A673 (cell line): ENCODE measurements at regions of chr1 and their contacts with region 1.

Region 1: GRCh38 chr1:60228041-60228491 is 154.5 kb upstream of the C1orf87 start:
- DNase-seq: peak; percentile 47
- H3K4me3 ChIP-seq: no peak overlapping the region
- H3K27ac ChIP-seq: no peak overlapping the region
- H3K4me1 ChIP-seq: no peaks in the 10 kb centered on the region
- H3K27me3 ChIP-seq: peaks cover 66% of the 10 kb centered on the region
- CTCF ChIP-seq: no peak

Region 2: GRCh38 chr1:59971464-59971911 is 256.6 kb before region 1 on chr1:
- CTCF ChIA-PET with region 1: no interaction called
- POLR2A ChIA-PET with region 1: no interaction called
- intact Hi-C with region 1: loop called (anchors 10 kb)
- DNase-seq: peak; percentile 85
- H3K4me3 ChIP-seq: no peak overlapping the region
- H3K27ac ChIP-seq: no peak overlapping the region
- H3K4me1 ChIP-seq: no peaks in the 10 kb centered on the region
- H3K27me3 ChIP-seq: peaks cover 25% of the 10 kb centered on the region
- CTCF ChIP-seq: peak; percentile 95